ENCODE measurements at regions of chr1 and their contacts with region 1.

Region 1: DNA sequence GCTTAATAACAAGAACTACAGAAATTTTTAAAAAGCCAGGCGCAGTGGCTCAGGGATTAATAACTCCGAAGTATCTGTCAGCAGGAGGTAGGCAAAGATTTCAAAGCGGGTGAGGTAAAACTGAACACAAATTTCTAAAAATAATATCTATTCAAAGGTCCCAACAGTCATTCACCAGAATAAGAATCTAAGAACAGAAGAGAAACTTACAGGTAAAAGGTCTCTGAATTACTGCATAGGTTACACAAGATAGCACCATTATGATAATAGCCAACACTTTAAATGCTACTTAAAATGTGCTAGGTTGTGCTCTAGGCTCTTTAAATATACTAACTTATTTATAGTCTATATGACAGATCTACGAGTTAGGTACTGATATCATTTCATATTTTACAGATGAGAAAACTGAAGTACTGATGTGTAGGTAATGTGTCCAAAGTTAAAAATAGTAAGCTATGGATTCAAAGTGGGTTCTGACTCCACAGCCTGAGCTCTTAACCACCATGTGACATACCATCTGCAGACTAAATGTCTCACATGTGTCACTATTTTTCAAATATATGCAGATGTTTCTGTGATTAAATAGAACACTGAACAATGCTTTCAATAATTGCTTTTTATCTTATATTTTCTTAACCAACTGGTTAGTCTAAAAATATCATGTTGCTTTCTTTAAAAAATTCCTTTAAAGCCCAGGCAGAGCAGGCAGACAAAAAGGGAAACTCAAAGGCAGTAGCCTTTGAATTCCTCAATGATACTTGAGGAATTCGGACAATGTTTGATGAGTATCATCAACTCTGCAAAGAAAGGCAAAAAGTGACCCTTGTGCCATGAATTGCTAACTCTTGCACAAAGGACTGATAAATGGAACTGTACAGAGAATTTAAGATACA is 80.5 kb upstream of the TTC39A start:
- DNase-seq: peak; percentile 12
- H3K4me3 ChIP-seq: no peak overlapping the region
- CTCF ChIP-seq: no peak

Region 2: DNA sequence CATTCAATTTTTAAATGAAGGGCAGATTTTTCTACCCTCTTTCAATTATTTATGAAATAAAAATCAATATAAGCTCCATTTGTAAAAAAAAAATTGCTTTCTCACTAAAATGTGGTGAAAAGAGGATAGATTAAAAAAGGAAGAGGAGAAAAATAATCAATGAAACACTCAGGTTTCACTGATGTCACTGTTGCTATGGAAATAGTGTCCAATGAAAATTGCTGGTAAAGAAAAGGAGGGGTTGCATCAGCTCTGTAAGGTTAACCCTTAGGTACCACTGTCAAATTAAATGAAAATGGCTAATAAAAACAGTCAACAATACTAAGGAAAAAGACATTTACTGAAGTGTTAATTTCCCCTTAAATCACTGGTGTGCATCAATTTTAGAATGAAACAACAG is 11.2 kb after region 1 on chr1:
- CTCF ChIA-PET with region 1: interaction called, 12 read pairs
- POLR2A ChIA-PET with region 1: no interaction called
- DNase-seq: no peak
- H3K4me3 ChIP-seq: no peak overlapping the region
- CTCF ChIP-seq: no peak

Region 3: DNA sequence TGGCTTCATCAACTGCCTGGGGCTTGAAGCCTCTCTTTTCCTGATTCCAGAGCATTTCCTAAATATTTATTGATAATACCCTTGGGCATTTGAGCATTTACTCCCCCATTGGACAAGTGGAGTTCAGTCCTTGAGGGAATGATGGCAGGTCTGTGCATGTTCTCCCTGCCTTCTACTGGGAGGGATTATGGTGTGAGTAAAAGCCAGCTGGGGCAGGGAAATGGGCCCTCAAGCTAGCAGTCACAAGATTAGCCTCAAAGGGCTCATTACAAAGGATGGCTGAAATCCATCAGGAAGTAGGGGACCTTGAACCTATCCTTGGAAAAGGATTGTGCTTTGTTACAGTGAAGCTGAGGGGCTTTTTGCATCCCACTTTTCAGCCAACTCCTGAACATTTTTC is 181.9 kb after region 1 on chr1:
- CTCF ChIA-PET with region 1: no interaction called
- POLR2A ChIA-PET with region 1: no interaction called
- DNase-seq: no peak
- H3K4me3 ChIP-seq: no peak overlapping the region
- CTCF ChIP-seq: no peak

Measured in AG04449 (cell line).